Activated naive CD4-positive, alpha-beta T cell treated with anti-CD3 and anti-CD28 coated beads for 36 hours (primary cell): ENCODE measurements at regions of chr20 and their contacts with region 1.

Region 1: GRCh38 chr20:44056010-44056698 is 130.8 kb downstream of the JPH2 start:
- DNase-seq: peak; percentile 70
- H3K4me3 Mint-ChIP-seq: no peak overlapping the region
- H3K27ac Mint-ChIP-seq: no peak overlapping the region
- H3K4me1 Mint-ChIP-seq: peaks cover 19% of the 10 kb centered on the region
- H3K27me3 Mint-ChIP-seq: no peaks in the 10 kb centered on the region

Region 2: DNA sequence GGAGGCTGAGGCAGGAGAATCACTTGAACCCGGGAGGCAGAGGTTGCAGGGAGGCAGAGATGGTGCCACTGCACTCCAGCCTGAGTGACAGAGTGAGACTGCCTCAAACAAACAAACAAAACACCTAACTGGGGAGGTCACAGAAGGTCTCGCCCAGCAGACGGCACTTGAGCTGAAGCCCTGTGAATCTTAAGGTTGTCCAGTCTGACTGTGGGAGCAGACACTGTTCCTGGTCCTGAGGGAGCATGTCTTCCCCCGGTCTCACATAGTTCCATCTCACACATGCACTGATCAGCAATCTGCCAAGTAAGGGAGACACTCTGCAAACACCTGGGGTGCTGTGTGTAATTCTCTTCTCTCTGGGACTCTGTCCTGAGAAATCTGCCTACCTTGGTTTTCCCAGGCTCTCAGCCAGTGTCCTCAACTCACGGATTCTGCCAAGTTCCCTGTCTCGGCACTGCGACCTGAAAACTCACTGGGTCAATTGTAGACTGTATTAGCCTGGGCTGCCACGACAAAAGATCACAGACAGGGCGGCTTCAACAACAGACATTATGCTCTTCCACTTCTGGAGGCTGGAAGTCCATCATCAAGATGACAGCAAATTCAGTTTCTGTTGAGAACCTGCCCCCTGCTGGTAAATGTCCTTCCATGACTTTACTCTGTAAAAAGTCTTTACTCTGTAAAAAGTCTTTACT is 36.5 kb after region 1 on chr20:
- CTCF ChIA-PET with region 1: interaction called, 3 read pairs
- intact Hi-C with region 1: loop called (anchors 1 kb)
- DNase-seq: peak; percentile 64
- H3K4me3 Mint-ChIP-seq: no peak overlapping the region
- H3K27ac Mint-ChIP-seq: no peak overlapping the region
- H3K4me1 Mint-ChIP-seq: no peaks in the 10 kb centered on the region
- H3K27me3 Mint-ChIP-seq: peaks cover 11% of the 10 kb centered on the region